Activated CD4-positive, alpha-beta memory T cell treated with anti-CD3 and anti-CD28 coated beads for 36 hours (primary cell): ENCODE measurements at regions of chr19 and their contacts with region 1.

Region 1: GRCh38 chr19:55632463-55632834 is 8.1 kb upstream of the ZNF784 start:
- DNase-seq: peak; percentile 88
- H3K4me3 Mint-ChIP-seq: no peak overlapping the region
- H3K27ac Mint-ChIP-seq: no peak overlapping the region
- H3K4me1 Mint-ChIP-seq: peaks cover 39% of the 10 kb centered on the region
- H3K27me3 Mint-ChIP-seq: no peaks in the 10 kb centered on the region

Region 2: GRCh38 chr19:55239004-55239740 is 393.3 kb before region 1 on chr19:
- CTCF ChIA-PET with region 1: no interaction called
- POLR2A ChIA-PET with region 1: no interaction called
- intact Hi-C with region 1: no loop called
- DNase-seq: no peak
- H3K4me3 Mint-ChIP-seq: no peak overlapping the region
- H3K27ac Mint-ChIP-seq: no peak overlapping the region
- H3K4me1 Mint-ChIP-seq: peaks cover 2% of the 10 kb centered on the region
- H3K27me3 Mint-ChIP-seq: no peaks in the 10 kb centered on the region

Region 3: GRCh38 chr19:55467236-55468053 is 165.0 kb before region 1 on chr19:
- CTCF ChIA-PET with region 1: interaction called, 16 read pairs
- POLR2A ChIA-PET with region 1: no interaction called
- intact Hi-C with region 1: loop called (anchors 5 kb)
- DNase-seq: peak; percentile 73
- H3K4me3 Mint-ChIP-seq: no peak overlapping the region
- H3K27ac Mint-ChIP-seq: no peak overlapping the region
- H3K4me1 Mint-ChIP-seq: peaks cover 3% of the 10 kb centered on the region
- H3K27me3 Mint-ChIP-seq: no peaks in the 10 kb centered on the region

Region 4: GRCh38 chr19:55580628-55581144 is 51.8 kb before region 1 on chr19 and contains the start of gene ZNF579:
- CTCF ChIA-PET with region 1: interaction called, 15 read pairs
- POLR2A ChIA-PET with region 1: no interaction called
- intact Hi-C with region 1: no loop called
- DNase-seq: peak; percentile 88
- H3K4me3 Mint-ChIP-seq: peak within 1 kb of the TSS; percentile 76
- H3K27ac Mint-ChIP-seq: peak within 1 kb of the TSS; percentile 78
- H3K4me1 Mint-ChIP-seq: peaks cover 23% of the 10 kb centered on the region
- H3K27me3 Mint-ChIP-seq: no peaks in the 10 kb centered on the region
- total RNA-seq, gene ZNF579: 6.6 to 6.7 TPM

Region 5: GRCh38 chr19:55605207-55605636 is 27.2 kb before region 1 on chr19:
- CTCF ChIA-PET with region 1: interaction called, 22 read pairs
- POLR2A ChIA-PET with region 1: interaction called, 5 read pairs
- intact Hi-C with region 1: no loop called
- DNase-seq: peak; percentile 100
- H3K4me3 Mint-ChIP-seq: peak overlapping the region; percentile 80
- H3K27ac Mint-ChIP-seq: peak overlapping the region; percentile 96
- H3K4me1 Mint-ChIP-seq: peaks cover 49% of the 10 kb centered on the region
- H3K27me3 Mint-ChIP-seq: no peaks in the 10 kb centered on the region

Region 6: DNA sequence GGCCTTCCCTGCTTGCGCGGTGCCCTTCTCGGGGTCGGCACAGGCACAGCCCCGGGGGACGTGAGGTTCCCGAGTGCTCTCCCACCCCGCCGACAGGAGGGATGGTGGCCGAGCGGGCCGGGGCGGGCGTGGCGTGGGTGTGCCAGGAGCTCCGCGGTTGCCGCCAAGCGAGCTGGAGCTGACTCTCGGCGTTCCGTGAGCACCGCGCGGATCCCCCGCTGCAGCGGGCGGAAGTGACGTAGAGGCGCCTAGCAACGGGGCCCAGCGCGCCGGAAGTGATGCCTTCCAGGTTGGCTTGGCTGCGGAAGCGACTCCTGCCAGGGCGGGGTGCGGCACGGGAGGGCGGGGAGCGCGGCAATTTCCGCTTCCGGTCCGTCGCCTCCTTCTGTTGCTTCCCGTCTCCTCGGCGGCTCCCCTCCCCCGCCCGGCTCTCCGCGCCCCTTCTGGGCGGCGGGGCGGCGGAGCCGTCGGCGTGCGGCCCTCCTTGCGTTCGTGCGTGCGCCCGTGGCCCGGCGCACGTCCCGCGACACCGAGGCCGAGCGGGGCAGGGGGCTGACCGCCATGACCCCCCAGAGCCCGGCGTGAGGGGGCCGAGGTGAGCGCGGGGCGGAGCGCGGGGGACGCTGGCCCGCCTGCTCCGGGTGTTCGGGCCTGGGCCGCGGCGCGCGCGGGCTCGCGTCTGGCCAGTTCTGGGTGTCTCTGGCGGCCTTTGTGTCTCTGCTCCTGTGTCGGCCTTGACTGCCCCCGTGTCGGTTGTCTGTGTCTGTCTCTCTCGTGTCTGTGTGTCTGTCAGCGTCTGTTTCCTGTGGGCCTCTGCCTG is 42.6 kb after region 1 on chr19 and contains the start of gene EPN1:
- CTCF ChIA-PET with region 1: interaction called, 19 read pairs
- POLR2A ChIA-PET with region 1: no interaction called
- intact Hi-C with region 1: loop called (anchors 2 kb)
- DNase-seq: peak; percentile 99
- H3K4me3 Mint-ChIP-seq: peak within 1 kb of the TSS; percentile 90
- H3K27ac Mint-ChIP-seq: peak within 1 kb of the TSS; percentile 86
- H3K4me1 Mint-ChIP-seq: peaks cover 59% of the 10 kb centered on the region
- H3K27me3 Mint-ChIP-seq: no peaks in the 10 kb centered on the region
- total RNA-seq, gene EPN1: 36.0 to 36.1 TPM

Region 7: GRCh38 chr19:55712804-55713631 is 80.6 kb after region 1 on chr19:
- CTCF ChIA-PET with region 1: no interaction called
- POLR2A ChIA-PET with region 1: no interaction called
- intact Hi-C with region 1: no loop called
- DNase-seq: no peak
- H3K4me3 Mint-ChIP-seq: no peak overlapping the region
- H3K27ac Mint-ChIP-seq: no peak overlapping the region
- H3K4me1 Mint-ChIP-seq: no peaks in the 10 kb centered on the region
- H3K27me3 Mint-ChIP-seq: peaks cover 18% of the 10 kb centered on the region